CD8-positive, alpha-beta memory T cell (primary cell): ENCODE measurements at regions of chr3 and their contacts with region 1.

Region 1: DNA sequence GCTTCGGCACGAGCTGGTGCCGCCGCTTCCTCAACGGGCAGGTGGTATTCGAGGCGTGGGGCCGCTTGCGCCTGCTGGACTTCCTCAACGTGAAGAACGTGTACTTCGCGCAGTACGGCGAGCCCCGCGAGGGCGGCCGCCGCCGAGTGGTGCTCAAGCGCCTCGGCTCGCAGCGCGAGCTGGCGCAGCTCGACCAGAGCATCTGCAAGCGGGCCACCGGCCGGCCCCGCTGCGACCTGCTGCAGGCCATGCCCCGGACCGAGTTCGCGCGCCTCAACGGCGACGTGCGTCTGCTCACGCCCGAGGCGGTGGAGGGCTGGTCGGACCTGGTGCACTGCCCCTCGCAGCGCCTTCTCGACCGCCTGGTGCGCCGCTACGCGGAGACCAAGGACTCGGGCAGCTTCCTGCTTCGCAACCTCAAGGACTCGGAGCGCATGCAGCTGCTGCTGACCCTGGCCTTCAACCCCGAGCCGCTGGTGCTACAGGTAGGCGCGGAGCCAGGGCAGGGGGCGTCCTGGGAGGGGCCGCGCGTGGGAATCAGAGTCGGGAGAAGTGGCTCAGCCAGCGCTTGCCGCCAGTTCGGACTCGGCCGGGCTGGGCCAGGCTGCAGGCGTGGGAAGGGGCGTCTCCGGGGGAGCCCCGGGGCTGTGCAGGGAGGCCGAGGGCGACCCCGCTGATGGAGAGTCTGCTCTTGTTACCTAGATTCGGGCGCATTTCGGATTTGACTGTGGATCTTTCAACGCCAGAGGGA is 1.1 kb downstream of the DIPK2A start:
- DNase-seq: peak in 4 of 5 donors; percentile 24 to 75 (median 52)
- H3K4me3 ChIP-seq: peak overlapping the region; percentile 69
- H3K4me3 Mint-ChIP-seq: peak overlapping the region; percentile 87 to 100 (median 97)
- H3K27ac ChIP-seq: peak overlapping the region; percentile 81
- H3K27ac Mint-ChIP-seq: peak overlapping the region; percentile 81 to 99 (median 96)
- H3K4me1 ChIP-seq: peaks cover 45% of the 10 kb centered on the region
- H3K4me1 Mint-ChIP-seq: peaks cover 38 to 47% (median 46%) of the 10 kb centered on the region in 3 donors
- H3K27me3 ChIP-seq: no peaks in the 10 kb centered on the region
- H3K27me3 Mint-ChIP-seq: peaks cover 2 to 16% of the 10 kb centered on the region in 2 donors

Region 2: GRCh38 chr3:143001369-143002082 is 971.2 kb before region 1 on chr3 and contains the start of gene U2SURP:
- CTCF ChIA-PET with region 1: no interaction called
- POLR2A ChIA-PET with region 1: interaction called, 23 read pairs
- DNase-seq: peak; percentile 87 to 95 (median 89)
- H3K4me3 ChIP-seq: peak within 1 kb of the TSS; percentile 99
- H3K4me3 Mint-ChIP-seq: peak within 1 kb of the TSS; percentile 93 to 100 (median 99)
- H3K27ac ChIP-seq: peak within 1 kb of the TSS; percentile 95
- H3K27ac Mint-ChIP-seq: peak within 1 kb of the TSS; percentile 92 to 100 (median 100)
- H3K4me1 ChIP-seq: peaks cover 39% of the 10 kb centered on the region
- H3K4me1 Mint-ChIP-seq: peaks cover 44 to 55% (median 52%) of the 10 kb centered on the region in 3 donors
- H3K27me3 ChIP-seq: no peaks in the 10 kb centered on the region
- H3K27me3 Mint-ChIP-seq: peaks cover 2 to 10% of the 10 kb centered on the region in 2 donors
- total RNA-seq, gene U2SURP: 146 to 148 TPM

Region 3: DNA sequence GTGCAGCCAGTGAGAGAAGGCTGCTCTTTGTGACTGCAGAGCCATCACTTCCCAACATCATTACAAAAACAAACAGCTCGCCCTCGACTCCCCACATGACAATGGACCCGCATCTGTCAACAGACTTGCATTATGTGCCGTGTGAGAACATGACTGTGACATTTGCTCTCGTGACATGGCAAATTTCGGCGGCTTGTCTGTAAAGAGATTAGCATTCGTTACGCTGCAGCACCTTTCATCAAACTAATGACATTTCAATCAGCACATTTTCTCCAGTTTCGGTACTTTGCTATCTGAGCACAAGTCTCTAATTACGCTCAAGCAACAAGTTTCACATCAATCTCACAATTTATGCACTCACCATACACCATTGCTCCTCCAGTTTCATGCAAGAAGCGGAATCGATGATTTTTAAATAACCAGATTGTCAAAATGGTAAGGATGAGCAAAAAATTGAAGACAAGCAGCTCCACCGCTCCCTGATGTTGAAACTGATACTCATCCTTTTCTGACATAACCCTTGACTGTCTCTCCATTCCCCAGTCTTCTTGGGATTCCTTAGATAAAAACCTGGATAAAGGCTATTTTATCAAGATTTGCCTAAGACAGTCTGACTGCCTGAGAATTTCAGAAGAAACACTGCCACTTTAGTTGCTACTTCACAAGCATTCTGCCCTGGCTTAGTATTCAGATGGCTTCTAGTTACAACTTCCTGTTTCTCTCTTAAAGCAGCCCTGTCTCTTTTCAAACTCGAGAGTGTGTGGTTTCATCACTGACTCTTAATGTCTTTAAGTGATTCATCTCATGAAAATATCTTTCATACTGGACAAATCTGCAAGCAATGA is 124.7 kb before region 1 on chr3 and contains the start of gene SLC9A9:
- CTCF ChIA-PET with region 1: interaction called, 5 read pairs
- POLR2A ChIA-PET with region 1: interaction called, 10 read pairs
- DNase-seq: peak in 3 of 5 donors; percentile 26 to 52 (median 29)
- H3K4me3 ChIP-seq: peak within 1 kb of the TSS; percentile 63
- H3K4me3 Mint-ChIP-seq: peak within 1 kb of the TSS; percentile 92 to 96 (median 94)
- H3K27ac ChIP-seq: peak within 1 kb of the TSS; percentile 20
- H3K27ac Mint-ChIP-seq: peak within 1 kb of the TSS; percentile 37 to 94 (median 92)
- H3K4me1 ChIP-seq: peaks cover 34% of the 10 kb centered on the region
- H3K4me1 Mint-ChIP-seq: peaks cover 45 to 66% (median 64%) of the 10 kb centered on the region in 3 donors
- H3K27me3 ChIP-seq: no peaks in the 10 kb centered on the region
- H3K27me3 Mint-ChIP-seq: no peaks in the 10 kb centered on the region
- total RNA-seq, gene SLC9A9: 1.2 to 2.2 TPM

Region 4: DNA sequence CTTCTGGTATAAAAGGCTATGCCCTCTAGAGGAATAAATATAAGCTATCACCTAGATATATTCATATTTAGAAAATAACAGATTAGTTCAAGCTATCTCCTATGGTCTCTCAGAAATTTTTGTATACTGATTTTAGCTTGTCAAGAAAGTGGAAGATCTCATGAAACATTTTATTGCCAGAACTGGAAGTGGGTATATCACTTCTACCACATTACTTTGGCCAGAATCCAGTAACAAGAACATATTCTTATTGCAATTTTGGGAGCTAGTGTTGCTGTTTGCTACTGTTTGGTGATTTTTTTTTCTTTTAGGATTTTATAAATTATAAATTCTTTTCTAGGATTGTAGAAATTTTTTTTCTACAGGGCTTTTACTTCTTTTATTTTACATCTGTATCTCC is 15.2 kb before region 1 on chr3:
- CTCF ChIA-PET with region 1: interaction called, 12 read pairs
- POLR2A ChIA-PET with region 1: interaction called, 3 read pairs
- DNase-seq: peak in 1 of 5 donors; percentile 9
- H3K4me3 ChIP-seq: no peak overlapping the region
- H3K4me3 Mint-ChIP-seq: peak overlapping the region in 5 of 7 donors; percentile 5 to 60 (median 34)
- H3K27ac ChIP-seq: no peak overlapping the region
- H3K27ac Mint-ChIP-seq: peak overlapping the region in 1 of 8 donors; percentile 7
- H3K4me1 ChIP-seq: peaks cover 7% of the 10 kb centered on the region
- H3K4me1 Mint-ChIP-seq: peaks cover 18 to 23% (median 22%) of the 10 kb centered on the region in 3 donors
- H3K27me3 ChIP-seq: no peaks in the 10 kb centered on the region
- H3K27me3 Mint-ChIP-seq: peaks cover 8 to 41% of the 10 kb centered on the region in 2 donors

Region 5: DNA sequence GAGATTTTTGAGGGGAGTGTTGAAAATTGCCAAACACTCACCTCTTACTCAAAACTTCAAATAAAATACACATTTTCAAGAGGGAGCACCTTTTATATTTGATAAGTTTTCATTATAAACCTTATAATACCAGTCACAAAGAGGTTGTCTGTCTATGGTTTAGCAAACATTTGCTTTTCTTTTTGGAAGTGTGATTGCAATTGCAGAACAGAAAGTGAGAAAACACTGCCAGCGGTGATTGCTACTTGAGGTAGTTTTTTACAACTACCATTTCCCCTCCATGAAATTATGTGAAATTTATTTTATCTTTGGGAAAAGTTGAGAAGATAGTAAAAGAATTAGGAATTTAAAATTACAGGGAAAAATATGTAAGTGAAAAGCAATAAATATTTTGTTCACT is 19.0 kb after region 1 on chr3:
- CTCF ChIA-PET with region 1: no interaction called
- POLR2A ChIA-PET with region 1: no interaction called
- DNase-seq: no peak
- H3K4me3 ChIP-seq: no peak overlapping the region
- H3K4me3 Mint-ChIP-seq: no peak overlapping the region
- H3K27ac ChIP-seq: no peak overlapping the region
- H3K27ac Mint-ChIP-seq: no peak overlapping the region
- H3K4me1 ChIP-seq: no peaks in the 10 kb centered on the region
- H3K4me1 Mint-ChIP-seq: peaks cover 15 to 38% (median 19%) of the 10 kb centered on the region in 3 donors
- H3K27me3 ChIP-seq: no peaks in the 10 kb centered on the region
- H3K27me3 Mint-ChIP-seq: no peaks in the 10 kb centered on the region